Left ventricle myocardium superior (tissue), 1 donor: ENCODE measurements at regions of chr12 and their contacts with region 1.

Region 1: DNA sequence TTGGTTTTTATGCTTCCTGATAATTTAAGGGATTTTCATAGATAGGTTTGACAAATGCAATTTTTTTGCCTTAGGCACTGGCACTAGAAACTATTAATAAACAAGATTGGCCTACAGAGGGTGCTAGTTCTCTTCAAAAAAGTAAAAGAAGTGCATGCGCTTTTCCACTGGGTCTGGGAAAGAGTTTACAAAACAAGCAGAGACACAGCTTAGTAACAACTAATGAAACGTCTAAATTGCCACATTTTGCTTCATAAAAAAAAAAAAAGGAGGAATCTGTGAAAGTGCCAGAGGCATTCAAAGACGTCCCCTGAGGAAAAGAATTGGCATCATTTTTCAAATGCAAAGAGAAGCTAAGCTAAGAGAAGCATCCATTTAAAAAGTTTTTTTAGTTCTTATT is 58.3 kb upstream of the EEA1 start:
- DNase-seq: no peak
- ATAC-seq: peak; percentile 79

Region 2: GRCh38 chr12:93419388-93420034 is 432.1 kb after region 1 on chr12:
- intact Hi-C with region 1: loop called (anchors 5 kb)
- DNase-seq: no peak
- ATAC-seq: peak; percentile 44